ENCODE measurements at regions of chr2 and their contacts with region 1.

Region 1: DNA sequence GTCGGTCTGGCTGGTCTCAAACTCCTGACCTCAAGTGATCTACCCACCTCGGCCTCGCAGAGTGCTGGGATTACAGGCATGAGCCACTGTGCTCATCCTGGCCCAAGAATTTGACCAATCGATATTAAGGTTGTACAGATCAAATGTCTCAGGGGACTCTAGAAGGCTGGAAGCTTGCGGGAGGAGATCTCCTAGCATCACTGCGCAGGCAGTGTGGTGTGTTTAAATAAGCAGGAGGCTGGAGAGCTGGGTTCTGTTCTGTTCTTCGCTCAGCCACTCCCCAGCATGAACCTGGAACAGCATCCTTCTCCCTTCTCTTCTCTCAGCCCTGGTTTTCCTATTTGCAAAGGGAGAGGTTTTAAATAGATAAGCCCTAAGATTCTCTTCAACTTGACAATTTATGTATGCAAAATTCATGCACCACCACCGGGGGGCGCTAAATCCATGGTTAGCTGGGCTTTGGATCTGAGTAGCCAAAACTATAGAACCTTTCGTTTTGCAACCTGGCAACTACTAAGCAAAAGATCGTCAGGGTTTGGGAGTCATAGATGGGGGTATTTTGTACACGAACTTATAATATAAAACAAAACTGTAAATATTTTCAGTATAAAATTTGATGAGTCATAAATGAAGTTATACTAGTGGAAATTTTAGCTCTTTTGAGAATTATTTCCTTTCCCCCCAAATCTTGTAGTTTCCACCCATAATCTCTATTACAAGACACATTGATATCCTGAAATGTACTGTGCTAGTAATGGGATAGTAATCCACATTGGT is 60.6 kb downstream of the SLC16A14 start:
- DNase-seq: peak; percentile 56
- ATAC-seq: peak; percentile 76
- H3K4me3 ChIP-seq: no peak overlapping the region
- H3K27ac ChIP-seq: no peak overlapping the region
- H3K4me1 ChIP-seq: no peaks in the 10 kb centered on the region
- H3K27me3 ChIP-seq: no peaks in the 10 kb centered on the region
- CTCF ChIP-seq: peak; percentile 92

Region 2: DNA sequence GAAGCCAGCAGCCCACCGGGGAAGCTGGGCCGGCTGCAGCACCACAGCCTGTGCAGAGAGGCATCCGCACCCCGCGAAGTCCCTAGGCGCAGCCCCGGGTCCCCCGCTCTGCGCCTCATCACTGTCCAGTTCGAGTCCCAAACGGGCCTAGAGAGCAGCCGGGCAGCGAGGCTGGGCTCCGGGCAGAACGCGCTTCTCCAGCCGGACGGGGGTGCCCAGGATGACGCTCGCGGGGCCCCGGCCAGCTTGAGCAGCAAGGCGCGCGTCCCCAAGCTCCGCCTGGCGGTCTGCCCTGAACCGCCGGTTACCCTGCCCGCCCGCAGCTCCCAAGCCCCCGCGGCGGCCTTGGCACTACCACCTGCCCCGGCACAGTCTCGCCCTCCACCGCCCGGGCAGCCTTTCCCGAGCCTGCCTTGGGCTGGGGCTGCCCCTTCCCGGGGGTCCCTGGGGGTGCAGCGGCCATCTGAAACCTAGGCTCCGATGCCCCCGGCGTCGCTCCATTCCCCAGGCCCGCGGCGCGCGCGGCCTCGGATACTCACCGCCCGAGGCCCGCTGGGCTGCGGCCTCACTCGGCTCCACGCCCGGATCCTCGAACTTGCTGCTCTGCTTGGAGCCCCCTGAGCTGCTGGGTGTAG is 60.0 kb after region 1 on chr2:
- CTCF ChIA-PET with region 1: no interaction called
- POLR2A ChIA-PET with region 1: no interaction called
- in situ Hi-C with region 1: no loop called
- intact Hi-C with region 1: loop called (anchors 2 kb)
- DNase-seq: no peak
- ATAC-seq: peak; percentile 78
- H3K4me3 ChIP-seq: peak overlapping the region; percentile 51 to 70
- H3K27ac ChIP-seq: peak overlapping the region; percentile 39; the same call in 1 of the 2 replicates
- H3K4me1 ChIP-seq: no peaks in the 10 kb centered on the region
- H3K27me3 ChIP-seq: no peaks in the 10 kb centered on the region
- CTCF ChIP-seq: no peak